ENCODE measurements at regions of chr4 and their contacts with region 1.

Region 1: GRCh38 chr4:1351854-1352633 is 5.0 kb downstream of the UVSSA start:
- DNase-seq: peak; percentile 91
- H3K4me3 ChIP-seq: no peak overlapping the region
- H3K27ac ChIP-seq: peak overlapping the region; percentile 27 to 44 (median 43)
- H3K4me1 ChIP-seq: peaks cover 0 to 36% (median 22%) of the 10 kb centered on the region in 4 donors
- H3K27me3 ChIP-seq: no peaks in the 10 kb centered on the region
- CTCF ChIP-seq: peak; percentile 81 to 96 (median 86)
- EP300 ChIP-seq: no peak
- POLR2A ChIP-seq: no peak

Region 2: GRCh38 chr4:1130316-1131186 is 221.5 kb before region 1 on chr4:
- intact Hi-C with region 1: loop called (anchors 2 kb)
- DNase-seq: peak; percentile 82
- H3K4me3 ChIP-seq: no peak overlapping the region
- H3K27ac ChIP-seq: no peak overlapping the region
- H3K4me1 ChIP-seq: peaks cover 0 to 10% (median 3%) of the 10 kb centered on the region in 4 donors
- H3K27me3 ChIP-seq: no peaks in the 10 kb centered on the region
- CTCF ChIP-seq: peak; percentile 96 to 99 (median 97)
- EP300 ChIP-seq: no peak
- POLR2A ChIP-seq: no peak

Region 3: GRCh38 chr4:1381944-1382541 is 30.0 kb after region 1 on chr4:
- intact Hi-C with region 1: no loop called
- DNase-seq: peak; percentile 58
- H3K4me3 ChIP-seq: no peak overlapping the region
- H3K27ac ChIP-seq: no peak overlapping the region
- H3K4me1 ChIP-seq: no peaks in the 10 kb centered on the region
- H3K27me3 ChIP-seq: no peaks in the 10 kb centered on the region
- CTCF ChIP-seq: no peak
- EP300 ChIP-seq: no peak
- POLR2A ChIP-seq: no peak

Region 4: DNA sequence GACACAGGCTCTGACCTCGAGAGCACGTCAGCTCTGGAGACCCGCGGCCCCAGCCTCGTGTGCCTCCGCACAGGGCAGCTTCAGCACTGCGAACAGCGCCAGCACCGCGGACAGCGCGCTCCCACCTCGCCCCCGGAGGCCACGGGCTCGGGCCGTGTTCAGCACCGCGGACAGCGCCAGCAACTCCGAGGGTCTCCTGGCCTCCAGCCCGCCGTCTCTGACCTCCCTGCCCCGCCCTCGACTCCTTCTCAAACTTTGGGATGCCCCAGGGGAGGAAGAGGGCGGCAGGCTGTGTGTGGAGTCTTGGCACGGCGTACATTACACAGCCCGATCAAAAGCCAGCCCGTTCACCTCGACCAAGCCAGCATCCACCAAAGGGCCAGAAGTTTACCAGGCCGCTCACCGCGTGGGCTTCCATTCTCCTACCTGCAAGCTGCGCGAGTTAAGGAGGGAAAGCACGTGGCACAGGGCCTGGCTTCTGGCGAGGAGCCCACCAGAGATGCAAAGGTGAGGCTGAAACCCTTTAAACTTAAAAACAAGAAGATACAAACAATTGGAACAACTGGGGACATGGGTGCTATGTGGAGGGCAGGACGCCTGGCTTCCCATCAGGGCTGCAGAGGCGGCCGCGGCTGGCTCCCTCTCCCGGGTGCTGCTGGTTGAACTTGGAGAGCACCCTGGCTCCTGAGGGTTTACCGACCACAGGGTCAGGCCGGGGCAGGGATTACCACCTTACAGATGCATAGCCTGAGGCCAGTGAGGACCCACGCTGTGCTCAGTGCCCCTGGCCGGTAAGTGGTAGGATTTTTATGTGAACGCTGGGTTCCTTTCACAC is 58.7 kb after region 1 on chr4:
- intact Hi-C with region 1: no loop called
- DNase-seq: peak; percentile 51
- H3K4me3 ChIP-seq: no peak overlapping the region
- H3K27ac ChIP-seq: no peak overlapping the region
- H3K4me1 ChIP-seq: peaks cover 0 to 28% (median 14%) of the 10 kb centered on the region in 4 donors
- H3K27me3 ChIP-seq: peaks cover 58 to 97% (median 85%) of the 10 kb centered on the region in 3 donors
- CTCF ChIP-seq: no peak
- EP300 ChIP-seq: no peak
- POLR2A ChIP-seq: no peak

Region 5: DNA sequence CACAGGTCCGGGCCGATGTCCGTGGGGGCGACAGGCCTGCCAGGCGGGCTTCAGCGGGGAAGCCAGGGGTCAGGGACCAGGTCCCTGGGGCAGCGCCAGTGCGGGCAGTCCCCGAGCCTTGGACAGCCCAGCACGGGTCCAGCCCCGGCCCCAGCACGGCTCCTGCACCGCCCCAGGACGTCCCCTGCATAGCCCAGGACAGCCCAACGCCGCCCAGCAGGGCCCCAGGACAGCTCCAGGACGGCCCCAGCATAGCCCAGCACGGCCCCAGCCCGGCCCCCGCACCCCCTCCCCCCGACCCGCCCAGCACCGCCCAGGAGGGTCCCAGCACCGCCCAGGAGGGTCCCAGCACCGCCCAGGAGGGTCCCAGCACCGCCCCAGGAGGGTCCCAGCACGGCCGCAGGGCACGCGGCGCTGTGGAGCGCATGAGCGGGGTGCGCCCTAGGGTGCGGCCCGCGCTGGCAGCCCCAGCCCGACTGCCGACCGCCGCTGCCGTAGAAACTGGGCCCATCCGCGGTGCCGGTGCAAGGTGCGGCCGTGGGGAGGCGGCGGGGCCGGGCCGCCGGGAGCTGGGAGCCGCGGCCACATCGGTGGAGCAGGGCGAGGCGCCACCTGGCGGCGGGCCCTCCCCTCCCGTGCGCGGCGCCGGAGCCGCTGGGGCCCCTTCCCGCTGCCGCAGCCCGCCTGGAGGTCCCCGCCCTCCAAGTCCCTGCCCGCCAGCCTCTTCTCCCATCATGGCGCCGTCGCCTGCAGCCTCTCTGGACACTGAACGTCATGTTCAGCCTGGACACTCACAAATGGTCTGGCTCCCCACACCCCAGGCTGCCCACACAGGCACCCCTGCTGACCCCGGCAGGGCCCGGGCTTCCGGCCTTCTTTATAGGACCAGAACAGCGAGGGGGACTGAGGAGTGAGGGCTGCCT is 161.0 kb after region 1 on chr4:
- intact Hi-C with region 1: loop called (anchors 10 kb)
- DNase-seq: no peak
- H3K4me3 ChIP-seq: peak overlapping the region in 2 of 4 donors; percentile 30 to 33
- H3K27ac ChIP-seq: no peak overlapping the region
- H3K4me1 ChIP-seq: peaks cover 0 to 9% (median 9%) of the 10 kb centered on the region in 4 donors
- H3K27me3 ChIP-seq: peaks cover 31 to 80% (median 60%) of the 10 kb centered on the region in 3 donors
- CTCF ChIP-seq: peak in 1 of 4 experiments; percentile 58
- EP300 ChIP-seq: no peak
- POLR2A ChIP-seq: no peak

Region 6: GRCh38 chr4:1629699-1630083 is 277.6 kb after region 1 on chr4:
- intact Hi-C with region 1: loop called (anchors 2 kb)
- DNase-seq: no peak
- H3K4me3 ChIP-seq: no peak overlapping the region
- H3K27ac ChIP-seq: no peak overlapping the region
- H3K4me1 ChIP-seq: peaks cover 0 to 5% (median 0%) of the 10 kb centered on the region in 4 donors
- H3K27me3 ChIP-seq: no peaks in the 10 kb centered on the region
- CTCF ChIP-seq: no peak
- EP300 ChIP-seq: no peak
- POLR2A ChIP-seq: no peak

Measured in sigmoid colon (tissue), 7 donors.